ENCODE measurements at regions of chr10 and their contacts with region 1.

Region 1: GRCh38 chr10:98170249-98171117 is 36.0 kb downstream of the R3HCC1L start:
- DNase-seq: no peak
- H3K4me3 ChIP-seq: no peak overlapping the region
- CTCF ChIP-seq: peak; percentile 70

Region 2: DNA sequence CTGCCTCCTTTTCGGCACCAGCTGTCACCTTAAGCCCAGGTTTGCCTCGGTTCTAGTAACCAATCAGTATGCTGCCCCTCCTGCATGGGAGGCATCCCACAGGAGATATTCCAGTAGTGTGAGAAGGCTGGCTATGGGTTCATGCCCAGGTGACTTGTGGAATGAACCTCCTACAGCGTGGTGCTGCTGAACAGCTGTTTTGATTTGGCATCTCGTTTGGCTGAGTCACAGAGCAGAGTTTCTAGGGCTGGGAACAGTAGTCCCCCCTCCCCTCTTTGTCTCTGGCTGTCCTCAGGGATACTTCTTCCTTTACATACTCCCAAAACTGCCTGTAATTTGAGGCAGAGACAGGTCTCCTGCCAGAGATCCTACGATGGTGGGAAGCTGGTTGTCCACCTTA is 19.9 kb before region 1 on chr10:
- CTCF ChIA-PET with region 1: interaction called, 23 read pairs
- POLR2A ChIA-PET with region 1: interaction called, 5 read pairs
- DNase-seq: no peak
- H3K4me3 ChIP-seq: no peak overlapping the region
- CTCF ChIP-seq: no peak

Region 3: GRCh38 chr10:98160026-98160425 is 10.5 kb before region 1 on chr10:
- CTCF ChIA-PET with region 1: interaction called, 25 read pairs
- POLR2A ChIA-PET with region 1: no interaction called
- DNase-seq: no peak
- H3K4me3 ChIP-seq: no peak overlapping the region
- CTCF ChIP-seq: no peak

Region 4: GRCh38 chr10:98186681-98187080 is 16.2 kb after region 1 on chr10:
- CTCF ChIA-PET with region 1: interaction called, 82 read pairs
- POLR2A ChIA-PET with region 1: no interaction called
- DNase-seq: no peak
- H3K4me3 ChIP-seq: no peak overlapping the region
- CTCF ChIP-seq: no peak

Region 5: GRCh38 chr10:98195120-98195519 is 24.6 kb after region 1 on chr10:
- CTCF ChIA-PET with region 1: interaction called, 28 read pairs
- POLR2A ChIA-PET with region 1: no interaction called
- DNase-seq: no peak
- H3K4me3 ChIP-seq: no peak overlapping the region
- CTCF ChIP-seq: no peak

Region 6: GRCh38 chr10:98205351-98205750 is 34.9 kb after region 1 on chr10:
- CTCF ChIA-PET with region 1: interaction called, 11 read pairs
- POLR2A ChIA-PET with region 1: no interaction called
- DNase-seq: no peak
- H3K4me3 ChIP-seq: no peak overlapping the region
- CTCF ChIP-seq: no peak

Region 7: GRCh38 chr10:98212196-98212595 is 41.7 kb after region 1 on chr10:
- CTCF ChIA-PET with region 1: interaction called, 10 read pairs
- POLR2A ChIA-PET with region 1: no interaction called
- DNase-seq: no peak
- H3K4me3 ChIP-seq: no peak overlapping the region
- CTCF ChIP-seq: no peak